Vagina (tissue), 2 donors: ENCODE measurements at regions of chrX and their contacts with region 1.

Region 1: GRCh38 chrX:15674841-15675489 is 10.4 kb upstream of the CLTRN start:
- DNase-seq: peak; percentile 97 to 99
- H3K4me3 ChIP-seq: peak overlapping the region; percentile 82 to 88
- H3K27ac ChIP-seq: peak overlapping the region; percentile 98
- H3K4me1 ChIP-seq: peaks cover 33% of the 10 kb centered on the region
- H3K27me3 ChIP-seq: no peaks in the 10 kb centered on the region
- CTCF ChIP-seq: no peak
- POLR2A ChIP-seq: peak in 1 of 2 donors; percentile 54

Region 2: DNA sequence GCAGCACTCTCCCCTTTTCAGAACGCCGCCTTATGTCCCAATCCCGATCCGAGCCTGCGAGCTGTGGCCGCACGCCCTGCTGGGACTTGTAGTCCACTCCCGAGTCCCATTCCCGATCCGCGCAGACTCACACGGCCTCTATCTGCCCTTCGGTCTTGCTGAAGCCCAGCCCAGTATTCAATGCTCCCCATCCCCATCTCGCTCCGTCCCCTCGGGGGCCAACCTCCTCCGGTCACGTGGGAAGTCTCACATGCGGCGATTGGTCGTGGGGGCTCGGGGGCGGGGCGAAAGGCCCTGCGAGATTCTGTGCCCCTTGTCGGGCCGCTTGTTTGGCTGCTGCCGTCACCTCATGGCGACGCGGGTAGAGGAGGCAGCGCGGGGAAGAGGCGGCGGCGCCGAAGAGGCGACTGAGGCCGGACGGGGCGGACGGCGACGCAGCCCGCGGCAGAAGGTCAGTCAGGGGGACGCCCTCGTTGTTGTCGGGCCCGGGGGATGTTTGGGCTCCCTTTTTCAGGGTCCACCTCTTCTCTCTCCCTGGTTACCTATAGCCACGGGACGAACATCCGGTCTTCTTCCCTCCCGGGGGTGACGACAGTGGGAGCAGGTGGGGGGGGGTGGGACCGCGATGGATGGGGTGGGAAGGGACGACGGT is 1111.3 kb after region 1 on chrX and contains the start of gene TXLNG:
- intact Hi-C with region 1: loop called (anchors 5 kb)
- DNase-seq: peak; percentile 100
- H3K4me3 ChIP-seq: peak within 1 kb of the TSS; percentile 94 to 97
- H3K27ac ChIP-seq: peak within 1 kb of the TSS; percentile 90
- H3K4me1 ChIP-seq: peaks cover 11% of the 10 kb centered on the region
- H3K27me3 ChIP-seq: no peaks in the 10 kb centered on the region
- CTCF ChIP-seq: peak in 1 of 3 experiments; percentile 9
- POLR2A ChIP-seq: peak in 1 of 2 donors; percentile 89
- total RNA-seq, gene TXLNG: 15.2 TPM